ENCODE measurements at regions of chr5 and their contacts with region 1.

Region 1: GRCh38 chr5:141636413-141637122 is at the starts of genes HDAC3 and RELL2:
- DNase-seq: peak; percentile 99
- H3K4me3 ChIP-seq: peak within 1 kb of the TSS; percentile 93 to 99
- H3K27ac ChIP-seq: peak within 1 kb of the TSS; percentile 66 to 89
- H3K4me1 ChIP-seq: peaks cover 5 to 28% of the 10 kb centered on the region in 2 experiments; a peak in 3 of 4 replicates
- H3K27me3 ChIP-seq: no peaks in the 10 kb centered on the region
- CTCF ChIP-seq: no peak
- EP300 ChIP-seq: no peak
- RAD21 ChIP-seq: no peak
- polyA plus RNA-seq, gene HDAC3: 104 and 115 TPM in 2 replicates
- polyA plus RNA-seq, gene RELL2: 15.6 and 16.1 TPM in 2 replicates

Region 2: DNA sequence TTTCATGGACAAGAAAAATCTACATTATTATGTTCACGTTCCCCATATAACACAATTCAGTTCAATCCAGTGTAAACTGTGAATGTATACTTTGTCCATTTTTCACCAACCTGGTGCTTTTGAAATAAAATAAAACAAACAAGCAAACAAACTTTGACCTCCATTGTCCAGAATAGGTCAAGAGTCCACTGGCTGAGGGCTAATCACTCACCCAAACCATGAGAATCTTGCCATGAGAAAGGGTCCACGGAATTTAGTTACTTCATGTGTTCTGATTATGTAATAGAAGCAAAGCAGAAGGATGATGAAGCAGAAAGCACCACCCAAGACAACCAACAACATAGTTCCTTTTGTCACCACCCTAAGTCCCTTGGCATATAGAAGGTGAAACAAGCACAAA is 46.4 kb before region 1 on chr5:
- CTCF ChIA-PET with region 1: interaction called, 42 read pairs
- POLR2A ChIA-PET with region 1: interaction called, 5 read pairs
- DNase-seq: no peak
- H3K4me3 ChIP-seq: no peak overlapping the region
- H3K27ac ChIP-seq: no peak overlapping the region
- H3K4me1 ChIP-seq: no peaks in the 10 kb centered on the region
- H3K27me3 ChIP-seq: no peaks in the 10 kb centered on the region
- CTCF ChIP-seq: no peak
- EP300 ChIP-seq: no peak
- RAD21 ChIP-seq: no peak

Region 3: GRCh38 chr5:141650851-141651727 is 14.5 kb after region 1 on chr5 and contains the start of gene FCHSD1:
- CTCF ChIA-PET with region 1: interaction called, 13 read pairs
- POLR2A ChIA-PET with region 1: interaction called, 18 read pairs
- DNase-seq: peak; percentile 99
- H3K4me3 ChIP-seq: peak within 1 kb of the TSS; percentile 74 to 83
- H3K27ac ChIP-seq: peak within 1 kb of the TSS in 1 of 2 experiments; percentile 45; a peak in 1 of 4 replicates
- H3K4me1 ChIP-seq: peaks cover 0 to 15% of the 10 kb centered on the region in 2 experiments; a peak in 1 of 4 replicates
- H3K27me3 ChIP-seq: no peaks in the 10 kb centered on the region
- CTCF ChIP-seq: no peak
- EP300 ChIP-seq: no peak
- RAD21 ChIP-seq: no peak
- polyA plus RNA-seq, gene FCHSD1: 49.2 and 58.3 TPM in 2 replicates

Region 4: DNA sequence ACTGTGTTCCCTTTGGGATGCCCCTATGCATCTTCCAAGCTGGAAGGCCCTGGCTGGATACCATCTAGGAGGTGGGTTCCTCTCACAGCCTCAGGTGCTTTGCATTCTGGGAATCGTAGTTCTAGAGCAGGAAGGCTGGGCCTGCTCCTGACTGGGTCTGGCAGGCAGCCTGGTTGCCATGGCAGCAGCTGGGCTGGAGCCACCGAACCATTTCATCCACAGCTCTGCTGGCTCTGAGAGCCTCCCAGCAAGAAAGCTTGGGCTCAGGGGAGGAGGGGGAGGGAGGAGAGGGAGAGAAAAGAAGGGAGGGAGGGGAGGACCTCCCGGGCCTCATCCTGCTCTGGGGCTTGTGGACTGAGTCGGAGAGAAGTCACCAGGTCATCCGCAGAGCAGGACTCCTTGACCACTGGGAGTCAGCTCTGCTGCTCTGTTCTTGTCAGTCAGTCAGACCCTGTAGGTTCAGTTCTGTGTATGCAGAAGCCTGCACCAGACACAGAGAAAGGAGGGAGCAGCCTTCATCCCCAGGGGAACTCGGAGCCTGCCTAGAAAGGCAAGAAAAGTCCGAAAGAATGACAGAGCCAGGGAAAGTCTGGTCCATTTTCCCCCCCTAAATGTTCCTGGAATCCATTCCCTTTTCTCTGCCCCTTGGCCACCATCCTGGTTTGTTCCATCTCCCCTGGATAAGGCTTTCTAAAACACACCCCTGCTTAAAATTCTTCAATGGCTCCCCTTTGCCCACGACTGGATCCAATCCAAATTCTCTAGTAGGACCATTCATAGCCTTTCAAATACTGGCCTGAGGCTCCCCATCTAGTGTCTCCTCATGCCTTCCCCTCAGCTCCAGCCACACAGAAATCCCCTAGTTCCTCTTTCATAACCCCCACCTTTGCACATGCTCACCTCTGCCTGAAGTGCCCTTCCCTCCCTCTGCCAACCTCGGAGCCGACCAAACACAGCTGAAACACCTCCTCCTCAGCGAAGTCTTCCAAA is 110.9 kb after region 1 on chr5:
- CTCF ChIA-PET with region 1: no interaction called
- POLR2A ChIA-PET with region 1: no interaction called
- DNase-seq: peak; percentile 91
- H3K4me3 ChIP-seq: no peak overlapping the region
- H3K27ac ChIP-seq: peak overlapping the region in 1 of 2 experiments; percentile 89; a peak in 2 of 4 replicates
- H3K4me1 ChIP-seq: peaks cover 0 to 38% of the 10 kb centered on the region in 2 experiments; a peak in 2 of 4 replicates
- H3K27me3 ChIP-seq: no peaks in the 10 kb centered on the region; the same call in 1 of the 2 replicates
- CTCF ChIP-seq: no peak
- EP300 ChIP-seq: no peak; a peak in 1 of 4 replicates
- RAD21 ChIP-seq: peak; percentile 14; the same call in 1 of the 2 replicates